Ascending aorta (tissue), 2 donors: ENCODE measurements at regions of chr14 and their contacts with region 1.

Region 1: DNA sequence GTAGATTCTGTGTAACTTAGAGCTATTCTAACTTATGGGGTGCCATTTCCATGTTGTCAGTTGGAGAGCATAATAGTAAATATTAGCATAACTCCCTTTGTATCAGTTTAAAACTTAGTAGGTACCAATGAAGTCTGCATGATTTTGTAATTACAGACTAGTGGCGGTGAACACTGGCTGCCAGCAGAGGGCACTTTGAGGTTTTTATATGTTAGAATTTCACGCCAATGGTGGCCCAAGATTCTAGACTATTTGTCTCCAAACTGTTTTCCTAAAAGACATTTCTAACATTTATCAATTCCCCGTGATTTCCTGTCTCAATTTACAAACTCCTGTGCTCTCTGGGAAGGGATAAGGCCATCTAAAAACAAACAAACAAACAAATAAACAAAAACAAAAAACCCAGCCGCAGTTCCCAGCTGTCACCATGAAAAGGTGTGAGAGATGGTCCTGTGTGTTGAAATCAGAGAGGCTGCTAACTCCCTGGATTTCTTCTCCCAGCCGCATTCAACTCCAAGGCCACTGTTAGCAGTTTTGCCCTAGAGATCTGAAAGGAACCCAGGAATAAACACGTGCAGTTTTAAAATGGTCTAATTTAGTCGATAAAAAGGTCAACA is 57.6 kb downstream of the BRMS1L start:
- DNase-seq: no peak
- H3K4me3 ChIP-seq: no peak overlapping the region
- H3K27ac ChIP-seq: no peak overlapping the region
- H3K4me1 ChIP-seq: peaks cover 0 to 5% of the 10 kb centered on the region in 2 donors
- H3K27me3 ChIP-seq: no peaks in the 10 kb centered on the region
- CTCF ChIP-seq: peak in 2 of 3 experiments; percentile 53 to 58

Region 2: GRCh38 chr14:35867273-35867629 is 16.5 kb before region 1 on chr14:
- intact Hi-C with region 1: no loop called
- DNase-seq: no peak
- H3K4me3 ChIP-seq: no peak overlapping the region
- H3K27ac ChIP-seq: peak overlapping the region; percentile 30 to 64
- H3K4me1 ChIP-seq: peaks cover 0 to 11% of the 10 kb centered on the region in 2 donors
- H3K27me3 ChIP-seq: no peaks in the 10 kb centered on the region
- CTCF ChIP-seq: no peak

Region 3: DNA sequence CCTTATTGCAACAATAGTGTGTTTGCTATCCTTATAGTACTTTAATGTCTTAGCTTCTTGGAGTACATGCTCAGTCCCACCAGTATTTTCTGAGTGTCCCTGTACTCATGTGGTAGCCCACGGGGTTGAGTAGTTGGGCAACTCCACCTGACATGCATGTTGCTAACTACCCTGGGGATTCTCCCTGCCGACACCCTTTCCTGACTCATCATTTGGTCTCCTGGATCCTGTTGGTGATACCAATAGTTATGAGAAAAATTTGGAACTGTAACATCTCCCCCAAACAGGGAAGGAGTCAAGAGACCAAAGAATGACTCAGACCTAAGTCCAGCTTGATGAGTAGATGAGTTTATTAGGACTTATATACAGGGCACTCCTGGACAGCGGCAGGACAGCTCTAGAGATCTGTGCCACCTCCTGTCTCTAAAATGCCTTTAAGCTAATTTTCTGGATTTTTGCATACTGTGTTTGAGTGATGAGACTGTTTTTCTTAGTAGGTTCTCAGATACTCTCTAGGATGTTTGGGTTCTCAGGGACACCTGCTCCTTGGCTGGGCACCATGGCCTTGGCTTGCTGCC is 44.0 kb after region 1 on chr14:
- intact Hi-C with region 1: no loop called
- DNase-seq: no peak
- H3K4me3 ChIP-seq: no peak overlapping the region
- H3K27ac ChIP-seq: no peak overlapping the region
- H3K4me1 ChIP-seq: no peaks in the 10 kb centered on the region
- H3K27me3 ChIP-seq: no peaks in the 10 kb centered on the region
- CTCF ChIP-seq: no peak

Region 4: GRCh38 chr14:36035675-36036074 is 151.9 kb after region 1 on chr14:
- intact Hi-C with region 1: no loop called
- DNase-seq: no peak
- H3K4me3 ChIP-seq: no peak overlapping the region
- H3K27ac ChIP-seq: no peak overlapping the region
- H3K4me1 ChIP-seq: no peaks in the 10 kb centered on the region
- H3K27me3 ChIP-seq: no peaks in the 10 kb centered on the region
- CTCF ChIP-seq: no peak

Region 5: GRCh38 chr14:36373982-36374673 is 490.3 kb after region 1 on chr14:
- intact Hi-C with region 1: loop called (anchors 10 kb)
- DNase-seq: peak in 1 of 2 donors; percentile 77
- H3K4me3 ChIP-seq: no peak overlapping the region
- H3K27ac ChIP-seq: no peak overlapping the region
- H3K4me1 ChIP-seq: no peaks in the 10 kb centered on the region
- H3K27me3 ChIP-seq: no peaks in the 10 kb centered on the region
- CTCF ChIP-seq: peak in 2 of 3 experiments; percentile 67 to 76